ENCODE measurements at regions of chr1 and their contacts with region 1.

Region 1: DNA sequence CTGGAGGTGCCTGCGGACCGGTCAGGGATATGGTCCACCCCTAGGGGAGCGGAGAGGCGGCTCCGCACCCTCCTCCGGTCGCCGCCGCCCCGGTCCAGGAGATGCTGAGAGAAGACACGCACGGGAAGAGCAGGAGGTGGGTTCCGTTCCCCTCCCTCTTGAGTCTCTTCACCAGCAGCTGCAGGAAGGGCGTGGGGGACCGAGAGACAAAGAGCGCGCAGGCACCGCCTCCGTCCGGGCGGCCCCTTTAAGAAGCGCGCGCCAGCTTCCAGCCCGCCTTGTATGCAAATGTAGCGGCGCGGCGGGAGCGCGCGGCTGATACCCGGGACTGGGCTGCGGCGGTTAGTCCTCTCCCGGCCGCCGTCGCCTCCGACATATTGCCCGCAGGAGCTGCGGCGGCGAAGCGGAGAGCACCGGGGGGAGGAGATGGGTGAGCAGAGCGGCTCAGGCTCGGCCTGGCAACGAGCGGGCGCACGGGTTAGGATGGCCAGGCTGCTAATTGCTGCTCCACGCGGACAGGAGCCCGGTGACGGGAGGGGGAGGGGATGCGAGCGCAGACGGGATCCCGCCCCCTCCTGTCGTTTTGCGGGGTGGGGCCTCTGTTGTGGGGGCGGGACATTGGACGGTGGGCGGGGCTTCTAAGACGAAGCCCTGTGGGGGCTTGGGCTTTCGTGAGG is at the start of gene TMEM39B:
- DNase-seq: peak; percentile 92
- ATAC-seq: peak; percentile 82
- H3K4me3 Mint-ChIP-seq: peak within 1 kb of the TSS; percentile 93
- H3K27ac Mint-ChIP-seq: peak within 1 kb of the TSS; percentile 95
- H3K4me1 Mint-ChIP-seq: peaks cover 35% of the 10 kb centered on the region
- H3K27me3 Mint-ChIP-seq: no peaks in the 10 kb centered on the region
- CTCF ChIP-seq: no peak
- total RNA-seq, gene TMEM39B: 23.1 and 23.8 TPM in 2 replicates

Region 2: DNA sequence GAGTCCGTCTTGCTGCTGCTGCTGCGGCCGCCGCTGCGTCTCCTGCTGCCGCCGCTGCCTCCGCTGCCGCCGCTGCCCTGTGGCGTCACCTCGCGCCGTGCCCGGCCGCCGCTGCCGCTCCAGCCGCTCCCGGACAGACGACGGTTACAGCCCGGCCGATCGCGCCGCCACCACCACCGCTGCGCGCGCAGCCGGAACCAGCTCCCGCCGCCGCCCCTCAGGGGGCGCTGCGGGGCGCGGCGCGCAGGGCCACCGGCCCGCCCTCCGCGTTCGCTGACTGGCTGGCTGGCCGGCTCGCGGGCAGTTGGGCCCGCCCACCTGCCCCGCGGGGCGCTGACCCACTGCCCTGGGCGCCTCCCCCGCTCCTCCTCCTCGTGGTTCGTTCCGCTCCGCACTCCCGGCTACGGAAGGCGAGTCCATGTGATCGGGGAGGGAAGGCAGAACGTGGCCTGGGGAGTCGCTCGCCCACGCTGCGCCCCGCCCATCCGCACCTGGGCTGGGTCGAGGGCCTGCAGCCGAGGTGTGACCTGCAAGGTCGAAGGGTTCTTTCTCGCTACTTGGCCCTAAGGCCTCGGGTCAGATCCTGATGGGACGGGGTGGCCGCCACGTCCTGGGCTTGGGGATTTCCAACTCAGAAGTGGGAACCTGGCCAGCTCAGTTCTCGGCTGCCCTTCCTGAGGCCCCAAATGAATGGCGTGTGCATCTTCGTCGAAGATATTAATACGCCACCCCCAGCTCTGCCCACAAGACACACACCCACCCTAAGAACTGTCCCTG is 134.4 kb before region 1 on chr1 and contains the start of gene PTP4A2:
- CTCF ChIA-PET with region 1: no interaction called
- POLR2A ChIA-PET with region 1: interaction called, 8 read pairs
- intact Hi-C with region 1: loop called (anchors 5 kb)
- DNase-seq: peak; percentile 88
- ATAC-seq: peak; percentile 78
- H3K4me3 Mint-ChIP-seq: peak within 1 kb of the TSS; percentile 91
- H3K27ac Mint-ChIP-seq: peak within 1 kb of the TSS; percentile 93
- H3K4me1 Mint-ChIP-seq: peaks cover 77% of the 10 kb centered on the region
- H3K27me3 Mint-ChIP-seq: no peaks in the 10 kb centered on the region
- CTCF ChIP-seq: no peak
- total RNA-seq, gene PTP4A2: 249 and 275 TPM in 2 replicates

Region 3: GRCh38 chr1:32052887-32053286 is 19.9 kb before region 1 on chr1:
- CTCF ChIA-PET with region 1: no interaction called
- POLR2A ChIA-PET with region 1: interaction called, 11 read pairs
- intact Hi-C with region 1: no loop called
- DNase-seq: no peak
- ATAC-seq: no peak
- H3K4me3 Mint-ChIP-seq: no peak overlapping the region
- H3K27ac Mint-ChIP-seq: no peak overlapping the region
- H3K4me1 Mint-ChIP-seq: peaks cover 2% of the 10 kb centered on the region
- H3K27me3 Mint-ChIP-seq: no peaks in the 10 kb centered on the region
- CTCF ChIP-seq: no peak

Region 4: GRCh38 chr1:32179443-32180185 is 106.9 kb after region 1 on chr1 and contains the start of gene TXLNA:
- CTCF ChIA-PET with region 1: interaction called, 3 read pairs
- POLR2A ChIA-PET with region 1: interaction called, 22 read pairs
- intact Hi-C with region 1: loop called (anchors 2 kb)
- DNase-seq: peak; percentile 89
- ATAC-seq: peak; percentile 91
- H3K4me3 Mint-ChIP-seq: peak within 1 kb of the TSS; percentile 90
- H3K27ac Mint-ChIP-seq: peak within 1 kb of the TSS; percentile 98
- H3K4me1 Mint-ChIP-seq: peaks cover 40% of the 10 kb centered on the region
- H3K27me3 Mint-ChIP-seq: no peaks in the 10 kb centered on the region
- CTCF ChIP-seq: no peak
- total RNA-seq, gene TXLNA: 52.0 and 54.1 TPM in 2 replicates

Region 5: DNA sequence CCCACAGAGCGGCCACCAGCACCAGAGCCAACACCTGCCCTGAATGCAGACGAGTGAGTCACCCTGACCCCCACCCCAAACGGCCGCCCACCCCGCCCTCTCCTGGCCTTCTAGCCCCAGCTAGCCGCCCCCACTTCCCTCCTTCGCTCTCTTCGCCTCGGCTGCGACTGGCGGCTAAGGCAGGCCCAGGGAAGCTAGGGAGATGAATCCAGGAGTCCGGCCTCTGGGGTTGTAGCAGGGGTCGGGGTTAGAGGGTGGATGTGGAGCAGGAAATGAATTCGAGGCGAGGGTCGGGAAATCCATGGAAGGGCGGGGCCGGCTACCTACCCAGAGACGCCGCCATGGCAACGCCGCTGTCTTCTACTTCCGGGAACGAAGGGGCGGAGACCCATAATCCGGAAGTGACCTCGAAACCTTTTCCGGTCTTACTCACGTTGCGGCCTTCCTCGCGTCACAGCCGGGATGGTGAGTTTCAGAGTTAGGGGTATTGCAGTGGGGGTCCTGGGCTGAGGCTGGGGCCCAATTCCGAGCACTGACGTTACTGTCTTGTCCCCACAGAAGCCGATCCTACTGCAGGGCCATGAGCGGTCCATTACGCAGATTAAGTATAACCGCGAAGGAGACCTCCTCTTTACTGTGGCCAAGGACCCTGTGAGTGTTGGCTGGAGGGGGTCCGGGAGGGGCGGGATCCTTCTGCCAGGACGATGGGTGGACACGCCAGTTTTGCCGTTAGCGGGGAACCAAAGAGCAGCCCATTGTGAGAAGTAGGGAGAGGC is 149.4 kb after region 1 on chr1 and contains the starts of genes EIF3I and TMEM234:
- CTCF ChIA-PET with region 1: no interaction called
- POLR2A ChIA-PET with region 1: interaction called, 4 read pairs
- intact Hi-C with region 1: loop called (anchors 5 kb)
- DNase-seq: peak; percentile 80
- ATAC-seq: peak; percentile 85
- H3K4me3 Mint-ChIP-seq: peak within 1 kb of the TSS; percentile 96
- H3K27ac Mint-ChIP-seq: peak within 1 kb of the TSS; percentile 95
- H3K4me1 Mint-ChIP-seq: peaks cover 50% of the 10 kb centered on the region
- H3K27me3 Mint-ChIP-seq: no peaks in the 10 kb centered on the region
- CTCF ChIP-seq: no peak
- total RNA-seq, gene EIF3I: 196 and 213 TPM in 2 replicates
- total RNA-seq, gene TMEM234: 31.8 and 35.5 TPM in 2 replicates

Region 6: GRCh38 chr1:32351399-32352238 is 278.9 kb after region 1 on chr1:
- CTCF ChIA-PET with region 1: no interaction called
- POLR2A ChIA-PET with region 1: interaction called, 3 read pairs
- intact Hi-C with region 1: loop called (anchors 1 kb)
- DNase-seq: peak; percentile 90
- ATAC-seq: peak; percentile 96
- H3K4me3 Mint-ChIP-seq: peak overlapping the region; percentile 91
- H3K27ac Mint-ChIP-seq: peak overlapping the region; percentile 91
- H3K4me1 Mint-ChIP-seq: peaks cover 22% of the 10 kb centered on the region
- H3K27me3 Mint-ChIP-seq: no peaks in the 10 kb centered on the region
- CTCF ChIP-seq: no peak

Region 7: DNA sequence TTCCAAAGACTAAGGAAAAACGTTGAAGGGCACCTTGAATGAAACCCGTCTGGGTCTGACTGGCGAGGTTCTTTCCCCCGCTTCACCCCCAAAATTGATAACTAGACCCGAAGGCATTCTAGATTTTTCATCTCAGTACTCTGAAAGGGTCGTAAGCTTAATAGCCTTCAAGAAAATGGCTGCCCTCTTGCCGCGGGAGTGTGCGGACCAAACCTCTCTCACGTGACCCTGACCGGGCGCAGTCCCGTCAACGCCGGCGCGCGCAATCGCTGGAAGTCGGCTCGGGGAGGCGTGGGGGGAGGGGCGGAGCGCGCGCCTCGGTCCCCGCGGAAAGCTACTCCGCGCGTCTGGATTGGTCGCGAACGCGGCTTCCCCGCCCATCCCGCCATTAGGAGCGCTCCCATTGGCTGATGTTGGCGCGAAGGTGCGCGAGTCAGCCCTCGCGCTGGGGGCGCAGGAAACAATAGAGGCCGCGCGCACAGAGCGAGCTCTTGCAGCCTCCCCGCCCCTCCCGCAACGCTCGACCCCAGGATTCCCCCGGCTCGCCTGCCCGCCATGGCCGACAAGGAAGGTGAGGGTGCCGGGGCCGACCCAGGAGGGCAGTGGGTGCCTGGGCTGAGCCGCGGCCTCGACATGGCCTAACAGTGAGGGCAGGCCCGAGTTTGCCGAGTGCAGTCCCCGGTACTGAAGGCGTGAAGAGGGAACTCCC is 578.1 kb after region 1 on chr1 and contains the start of gene RBBP4:
- CTCF ChIA-PET with region 1: no interaction called
- POLR2A ChIA-PET with region 1: interaction called, 3 read pairs
- intact Hi-C with region 1: loop called (anchors 1 kb)
- DNase-seq: peak; percentile 99
- ATAC-seq: peak; percentile 82
- H3K4me3 Mint-ChIP-seq: peak within 1 kb of the TSS; percentile 97
- H3K27ac Mint-ChIP-seq: peak within 1 kb of the TSS; percentile 100
- H3K4me1 Mint-ChIP-seq: peaks cover 70% of the 10 kb centered on the region
- H3K27me3 Mint-ChIP-seq: no peaks in the 10 kb centered on the region
- CTCF ChIP-seq: no peak
- total RNA-seq, gene RBBP4: 228 and 241 TPM in 2 replicates

Measured in activated B cell treated with CpG ODN at 0.5 μM for 24 hours (primary cell).